Posterior vena cava (tissue), 2 donors: ENCODE measurements at regions of chr13 and their contacts with region 1.

Region 1: DNA sequence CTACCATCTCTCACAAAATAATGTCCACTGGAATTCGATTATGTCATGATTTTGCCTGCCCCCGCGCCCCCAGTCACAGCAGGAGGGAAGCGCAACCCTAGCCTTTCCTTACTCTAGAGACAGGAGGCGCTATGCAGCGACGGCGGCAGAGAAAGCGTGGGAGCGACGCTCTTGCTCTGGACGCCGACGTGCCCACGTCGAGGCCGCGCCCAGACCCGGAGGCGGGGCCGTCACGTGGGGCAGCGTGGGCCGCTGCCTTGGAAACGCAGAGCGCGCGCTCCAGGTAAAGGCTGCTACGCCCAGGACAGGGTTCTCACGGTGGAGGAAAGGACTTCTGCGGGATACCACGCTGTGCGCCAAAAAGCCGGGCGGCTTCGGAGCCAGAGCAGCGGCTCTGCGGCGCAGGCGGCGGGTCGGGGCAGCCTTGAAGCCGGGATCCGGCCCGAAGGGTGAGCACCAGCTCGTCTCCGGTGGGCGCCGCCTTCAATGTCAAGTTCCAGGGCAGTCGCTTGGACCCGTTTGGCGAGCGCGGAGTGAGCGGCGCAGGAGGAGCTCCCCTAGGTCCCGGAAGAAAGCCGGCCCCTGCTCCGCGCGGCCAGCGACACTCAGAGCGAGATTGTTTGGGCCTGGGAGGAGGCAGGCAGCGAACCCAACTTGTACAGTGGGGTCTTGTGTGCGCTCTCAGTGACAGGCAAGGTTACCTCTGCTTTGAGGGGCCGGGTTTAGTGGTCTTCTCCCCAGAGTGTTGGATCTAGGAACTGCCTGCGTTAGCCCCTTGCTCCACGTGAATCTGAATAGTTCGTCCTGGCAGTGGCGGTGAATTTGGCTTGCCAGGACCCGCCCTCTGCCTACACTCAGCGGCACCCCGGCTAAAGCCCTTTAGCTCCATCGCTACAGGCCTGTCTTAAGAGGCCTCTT is 121.7 kb downstream of the MRPL57 start:
- DNase-seq: peak; percentile 94

Region 2: DNA sequence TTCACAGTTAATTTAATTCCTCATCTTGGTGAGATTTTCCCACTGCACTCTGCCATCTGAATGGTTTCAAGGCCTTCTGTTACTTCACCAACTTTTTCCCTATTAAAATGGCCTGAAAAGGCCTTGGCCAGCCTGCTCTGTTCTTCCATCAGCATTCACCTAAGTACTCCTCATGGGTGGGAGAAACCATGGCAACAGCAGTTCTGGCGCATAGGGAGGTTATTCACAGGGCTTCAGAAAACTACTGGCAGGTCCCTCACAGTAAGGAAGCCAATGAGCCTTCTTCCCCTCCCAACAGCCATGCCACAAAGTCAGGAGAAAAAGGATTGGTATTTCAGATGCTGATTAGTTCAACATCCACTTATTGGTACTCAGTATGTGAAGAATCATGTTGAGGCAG is 1088.2 kb before region 1 on chr13:
- intact Hi-C with region 1: no loop called
- DNase-seq: no peak

Region 3: GRCh38 chr13:20945952-20946383 is 352.2 kb before region 1 on chr13:
- intact Hi-C with region 1: loop called in 1 of 2 experiments (anchors 10 kb)
- DNase-seq: peak; percentile 83

Region 4: DNA sequence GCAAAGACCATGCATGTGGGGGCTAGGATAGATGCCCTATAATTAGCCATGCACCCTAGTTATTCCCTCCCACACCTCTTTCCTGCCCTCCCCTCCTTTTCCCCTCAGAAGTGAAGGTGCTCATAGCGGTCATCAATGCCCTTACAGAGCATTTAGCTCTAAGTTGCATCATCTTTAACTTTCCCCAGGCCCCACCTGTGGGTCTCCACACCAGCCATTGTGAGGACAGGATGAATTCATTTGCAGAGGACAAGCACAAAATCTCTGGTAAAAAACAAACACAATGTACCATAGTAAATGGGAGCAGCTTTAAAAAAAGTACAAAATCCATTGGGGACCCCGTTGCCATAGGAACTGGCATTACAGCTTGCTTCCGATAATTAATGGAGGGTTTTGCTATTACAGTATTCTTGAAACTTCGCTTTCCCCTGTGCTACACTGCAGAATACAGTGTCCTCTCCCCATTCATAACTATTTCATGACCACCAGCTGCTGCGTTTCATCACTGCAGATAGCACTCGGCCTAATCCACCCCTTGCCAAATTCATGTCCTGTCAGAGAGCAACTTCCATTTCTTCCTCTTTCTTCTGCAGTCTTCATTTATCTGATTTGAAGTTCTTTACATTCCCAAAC is 50.4 kb after region 1 on chr13:
- intact Hi-C with region 1: no loop called
- DNase-seq: no peak

Region 5: DNA sequence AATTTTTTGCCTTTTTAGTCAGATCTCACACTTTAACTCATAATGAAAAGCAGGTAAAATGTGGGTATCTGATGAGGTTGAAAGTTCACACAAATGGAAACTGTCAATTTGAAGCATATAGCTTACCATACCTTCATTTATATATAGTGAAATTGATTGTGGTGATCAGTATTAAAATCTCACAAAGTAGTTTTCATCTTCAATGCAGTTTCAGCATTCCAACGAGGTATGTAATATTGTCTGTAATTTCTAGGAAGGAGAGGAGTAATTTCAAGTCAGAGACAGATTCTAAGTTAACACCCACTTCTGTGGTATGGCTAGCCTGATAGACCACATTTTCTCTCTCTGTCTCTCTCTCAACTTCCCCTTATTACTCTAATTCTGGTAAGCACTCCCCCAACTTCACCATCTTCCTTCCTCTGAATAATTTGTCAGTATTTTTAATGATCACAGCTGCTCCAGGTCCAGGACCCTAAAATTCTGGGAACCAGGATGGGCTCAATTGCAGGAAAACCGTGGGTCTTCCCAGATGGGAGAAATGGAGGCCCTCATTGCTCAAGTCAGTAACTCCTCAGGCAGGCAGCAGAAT is 828.4 kb after region 1 on chr13:
- intact Hi-C with region 1: no loop called
- DNase-seq: no peak